ENCODE measurements at regions of chr4 and their contacts with region 1.

Region 1: GRCh38 chr4:85498068-85498733 is 23.3 kb downstream of the ARHGAP24 start:
- DNase-seq: peak; percentile 35
- ATAC-seq: peak; percentile 98
- H3K4me3 Mint-ChIP-seq: peak overlapping the region; percentile 44
- H3K27ac Mint-ChIP-seq: peak overlapping the region; percentile 81
- H3K4me1 Mint-ChIP-seq: peaks cover 75% of the 10 kb centered on the region
- H3K27me3 Mint-ChIP-seq: no peaks in the 10 kb centered on the region
- CTCF ChIP-seq: no peak

Region 2: GRCh38 chr4:85358831-85359470 is 139.2 kb before region 1 on chr4:
- CTCF ChIA-PET with region 1: no interaction called
- POLR2A ChIA-PET with region 1: no interaction called
- intact Hi-C with region 1: no loop called
- DNase-seq: no peak
- ATAC-seq: no peak
- H3K4me3 Mint-ChIP-seq: no peak overlapping the region
- H3K27ac Mint-ChIP-seq: no peak overlapping the region
- H3K4me1 Mint-ChIP-seq: peaks cover 2% of the 10 kb centered on the region
- H3K27me3 Mint-ChIP-seq: peaks cover 10% of the 10 kb centered on the region
- CTCF ChIP-seq: no peak

Region 3: GRCh38 chr4:85482010-85482738 is 16.0 kb before region 1 on chr4:
- CTCF ChIA-PET with region 1: no interaction called
- POLR2A ChIA-PET with region 1: interaction called, 27 read pairs
- intact Hi-C with region 1: loop called (anchors 2 kb)
- DNase-seq: no peak
- ATAC-seq: peak; percentile 35
- H3K4me3 Mint-ChIP-seq: peak overlapping the region; percentile 9
- H3K27ac Mint-ChIP-seq: peak overlapping the region; percentile 81
- H3K4me1 Mint-ChIP-seq: peaks cover 69% of the 10 kb centered on the region
- H3K27me3 Mint-ChIP-seq: no peaks in the 10 kb centered on the region
- CTCF ChIP-seq: no peak

Region 4: DNA sequence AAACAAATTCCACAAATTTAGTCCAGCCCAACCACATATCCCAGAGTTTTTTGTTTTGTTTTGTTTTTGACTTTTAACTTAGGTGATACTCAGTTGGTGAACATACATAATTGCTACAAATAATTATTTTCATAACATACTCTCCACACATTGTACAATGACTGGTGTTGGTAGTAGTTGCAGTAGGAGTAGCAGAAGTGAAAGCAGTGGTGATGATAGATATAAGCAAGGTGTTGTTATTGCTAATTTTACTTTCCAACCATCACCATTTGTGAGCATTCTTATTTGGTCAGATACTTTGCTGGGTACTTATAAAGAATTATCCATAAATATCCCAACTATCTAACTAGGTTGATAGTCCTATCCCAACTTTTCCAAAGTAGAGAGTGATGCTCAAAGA is 24.1 kb after region 1 on chr4:
- CTCF ChIA-PET with region 1: no interaction called
- POLR2A ChIA-PET with region 1: interaction called, 3 read pairs
- intact Hi-C with region 1: loop called (anchors 2 kb)
- DNase-seq: no peak
- ATAC-seq: no peak
- H3K4me3 Mint-ChIP-seq: no peak overlapping the region
- H3K27ac Mint-ChIP-seq: no peak overlapping the region
- H3K4me1 Mint-ChIP-seq: peaks cover 57% of the 10 kb centered on the region
- H3K27me3 Mint-ChIP-seq: no peaks in the 10 kb centered on the region
- CTCF ChIP-seq: no peak

Measured in activated B cell treated with CpG ODN at 0.5 μM for 24 hours (primary cell).